Activated T-helper 1 cell treated with anti-CD3 and anti-CD28 coated beads, Interleukin-12 subunit alpha, Interleukin-12 subunit beta, Interleukin-2, Interleukin-4 antibody, amounts not matched to agents 30 ng/mL and 10 ng/mL and 1 ng/mL, durations not matched to agents 14 hours and 24 hours and 36 hours (primary cell): ENCODE measurements at regions of chr7 and their contacts with region 1.

Region 1: DNA sequence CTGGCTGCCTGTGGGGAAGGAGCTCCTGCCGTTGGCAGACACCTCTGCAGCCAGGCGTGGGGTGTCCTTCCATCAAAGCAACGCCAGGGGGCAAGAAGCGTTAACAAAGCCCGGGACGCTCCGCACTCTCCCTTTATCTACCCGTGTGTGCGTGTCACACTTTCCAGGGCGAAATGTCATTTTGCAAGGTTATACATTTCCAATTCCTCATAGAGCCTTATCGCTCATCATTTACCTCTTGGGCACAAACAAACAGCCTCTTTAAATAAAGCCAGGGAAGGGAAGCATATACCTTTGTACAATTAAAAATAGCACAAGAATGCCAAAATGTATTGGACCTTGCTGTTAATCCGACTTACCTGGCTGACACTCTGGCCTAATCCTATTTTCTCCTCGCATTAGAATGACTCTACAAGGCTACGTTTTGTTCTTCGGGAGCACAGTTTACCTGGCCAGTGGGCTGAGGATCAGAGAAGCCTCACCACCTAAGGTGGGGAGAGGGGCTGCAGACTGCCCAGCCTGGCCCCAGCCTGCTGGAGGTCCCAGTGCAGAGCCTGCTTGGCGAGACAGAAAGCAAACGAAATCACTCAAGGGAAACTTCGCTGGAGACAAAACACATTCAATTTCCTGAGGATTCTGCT is 77.6 kb upstream of the EN2 start:
- DNase-seq: peak; percentile 47
- H3K4me3 Mint-ChIP-seq: no peak overlapping the region
- H3K27ac Mint-ChIP-seq: peak overlapping the region; percentile 2
- H3K4me1 Mint-ChIP-seq: peaks cover 27% of the 10 kb centered on the region
- H3K27me3 Mint-ChIP-seq: peaks cover 69% of the 10 kb centered on the region

Region 2: GRCh38 chr7:155456738-155457564 is 76.6 kb after region 1 on chr7:
- intact Hi-C with region 1: loop called (anchors 2 kb)
- DNase-seq: no peak
- H3K4me3 Mint-ChIP-seq: peak overlapping the region; percentile 5
- H3K27ac Mint-ChIP-seq: peak overlapping the region; percentile 70
- H3K4me1 Mint-ChIP-seq: peaks cover 4% of the 10 kb centered on the region
- H3K27me3 Mint-ChIP-seq: peaks cover 68% of the 10 kb centered on the region